ENCODE measurements at regions of chr3 and their contacts with region 1.

Region 1: GRCh38 chr3:51718547-51719409 is 11.9 kb downstream of the GRM2 start:
- DNase-seq: peak; percentile 43 to 67
- H3K4me3 ChIP-seq: no peak overlapping the region
- H3K27ac ChIP-seq: no peak overlapping the region
- H3K4me1 ChIP-seq: no peaks in the 10 kb centered on the region
- H3K27me3 ChIP-seq: no peaks in the 10 kb centered on the region
- CTCF ChIP-seq: peak; percentile 60; the same call in 1 of the 2 replicates

Region 2: GRCh38 chr3:51799879-51800749 is 81.3 kb after region 1 on chr3:
- CTCF ChIA-PET with region 1: no interaction called
- POLR2A ChIA-PET with region 1: interaction called, 3 read pairs
- intact Hi-C with region 1: loop called (anchors 5 kb)
- DNase-seq: peak; percentile 23 to 65
- H3K4me3 ChIP-seq: no peak overlapping the region
- H3K27ac ChIP-seq: no peak overlapping the region
- H3K4me1 ChIP-seq: no peaks in the 10 kb centered on the region
- H3K27me3 ChIP-seq: no peaks in the 10 kb centered on the region
- CTCF ChIP-seq: peak; percentile 78

Region 3: DNA sequence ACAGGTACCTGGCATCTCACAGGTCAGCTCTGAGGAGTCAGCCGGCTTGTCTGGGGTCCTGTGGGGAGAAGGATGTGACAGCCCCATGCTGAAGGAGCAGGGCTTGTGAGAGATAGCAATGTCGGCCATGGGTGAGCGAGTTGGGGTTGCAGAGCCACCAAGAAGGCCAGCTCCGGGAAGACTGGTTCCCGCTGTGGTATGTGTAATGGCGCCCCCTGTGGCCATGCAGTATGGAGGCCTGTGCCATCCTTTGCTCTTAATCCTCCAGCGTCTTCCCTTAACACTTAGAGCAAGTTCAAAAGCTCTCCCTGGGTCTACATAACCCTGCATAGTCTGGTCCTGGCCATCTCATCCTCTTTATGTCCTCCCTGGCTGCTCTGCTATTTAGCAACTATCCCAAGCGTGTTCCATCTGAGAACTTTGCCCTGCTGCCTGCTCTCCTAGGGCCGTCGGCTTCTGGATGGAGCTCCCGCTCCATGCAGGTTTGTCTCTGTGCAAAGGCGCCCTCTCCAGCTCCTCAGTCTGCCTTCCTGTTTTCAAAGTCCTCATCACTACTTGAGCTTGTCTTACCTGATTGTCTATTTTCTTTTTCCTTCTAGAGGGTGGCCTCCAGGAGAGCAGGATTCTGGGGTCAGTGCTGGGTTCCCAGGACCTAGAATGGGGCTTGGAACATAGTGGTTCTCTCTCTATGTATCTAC is 101.1 kb after region 1 on chr3:
- CTCF ChIA-PET with region 1: no interaction called
- POLR2A ChIA-PET with region 1: no interaction called
- intact Hi-C with region 1: no loop called
- DNase-seq: no peak
- H3K4me3 ChIP-seq: no peak overlapping the region
- H3K27ac ChIP-seq: no peak overlapping the region
- H3K4me1 ChIP-seq: no peaks in the 10 kb centered on the region
- H3K27me3 ChIP-seq: peaks cover 14% of the 10 kb centered on the region; the same call in 1 of the 2 replicates
- CTCF ChIP-seq: peak; percentile 51

Region 4: DNA sequence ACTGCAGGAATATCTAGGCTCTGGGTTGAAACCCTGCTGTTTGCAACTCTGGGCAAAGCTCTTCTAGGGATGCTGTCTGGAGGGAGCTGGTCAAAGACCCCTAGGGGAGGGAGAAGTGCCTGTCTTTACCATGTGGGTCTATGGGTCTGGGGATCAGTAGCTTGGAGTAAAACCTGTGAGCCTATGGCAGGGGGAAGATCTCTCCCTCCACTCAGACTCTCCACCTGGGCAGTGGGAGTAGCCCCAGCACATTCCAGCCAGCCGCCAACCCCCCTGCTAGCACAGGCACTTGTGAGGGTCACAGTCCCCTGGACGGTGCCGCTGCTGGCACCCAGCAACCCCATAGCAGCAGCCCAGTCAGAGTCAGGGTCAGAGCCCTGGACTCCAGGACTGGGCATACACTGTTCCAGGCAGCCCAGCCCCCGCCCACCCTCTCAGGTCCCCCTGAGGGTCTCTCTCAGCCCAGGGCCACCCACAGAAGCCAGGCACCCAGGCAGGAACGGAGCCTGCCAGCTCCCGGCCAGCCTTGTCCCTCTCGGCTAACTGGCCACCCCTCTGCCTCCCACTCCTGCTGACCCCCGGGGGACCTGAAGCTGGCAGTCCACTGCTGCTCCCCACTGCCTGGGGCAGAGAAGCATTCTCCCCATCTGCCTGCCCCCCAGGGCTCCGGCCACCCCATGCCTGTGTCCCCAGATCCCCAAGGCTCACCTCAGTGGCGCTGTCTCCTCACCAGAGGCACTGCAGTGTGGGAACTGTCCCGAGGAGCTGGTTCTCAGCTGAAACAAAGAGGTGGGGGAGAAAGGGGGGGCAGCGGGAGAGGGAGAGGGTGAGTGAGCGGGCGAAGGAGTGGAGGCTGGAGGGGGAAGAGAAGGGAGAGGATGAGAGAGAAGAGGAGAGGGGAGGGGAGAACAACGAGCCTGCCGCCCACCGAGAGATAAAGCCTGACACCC is 579.6 kb after region 1 on chr3:
- CTCF ChIA-PET with region 1: no interaction called
- POLR2A ChIA-PET with region 1: interaction called, 12 read pairs
- intact Hi-C with region 1: no loop called
- DNase-seq: no peak
- H3K4me3 ChIP-seq: no peak overlapping the region
- H3K27ac ChIP-seq: no peak overlapping the region
- H3K4me1 ChIP-seq: no peaks in the 10 kb centered on the region
- H3K27me3 ChIP-seq: no peaks in the 10 kb centered on the region
- CTCF ChIP-seq: no peak